ENCODE measurements at regions of chr11 and their contacts with region 1.

Region 1: DNA sequence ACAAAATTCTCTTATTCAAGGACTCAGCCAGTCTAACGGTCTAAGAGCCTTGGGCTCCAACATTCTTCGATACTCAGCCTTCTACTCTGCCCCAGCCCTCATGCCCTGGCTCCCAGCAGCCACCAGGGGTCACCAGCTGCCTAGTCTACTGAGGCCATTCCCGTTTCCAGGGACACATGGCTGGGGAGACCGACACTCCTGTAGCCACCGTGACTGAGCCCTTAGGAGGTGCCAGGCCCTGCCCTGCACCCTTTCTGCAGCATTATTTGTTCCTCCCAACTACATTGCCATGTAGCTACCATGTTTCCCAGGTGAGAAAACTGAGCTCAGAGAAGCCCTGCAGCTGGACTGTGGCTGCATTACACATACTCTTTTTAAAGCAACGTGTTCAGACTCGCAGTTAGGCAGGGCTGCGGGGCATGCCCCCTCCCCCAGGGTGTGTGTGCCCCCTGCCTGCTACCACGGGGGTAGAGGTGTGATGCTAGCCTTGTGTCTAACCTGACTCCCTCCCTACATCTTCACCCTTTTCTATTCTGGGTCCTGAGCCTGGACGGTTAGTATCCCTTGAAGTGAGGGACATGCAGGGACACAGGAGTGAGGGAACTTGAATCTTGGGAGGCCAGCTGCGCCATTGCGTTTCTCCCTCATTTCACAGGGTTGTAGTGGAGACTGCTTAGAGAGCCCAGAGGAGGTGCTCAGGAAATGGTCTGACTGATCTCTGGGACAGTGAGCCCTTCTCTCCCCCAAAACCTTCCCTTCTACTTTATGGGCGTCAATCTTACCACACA is 17.5 kb downstream of the ATG16L2 start:
- DNase-seq: peak; percentile 64 to 82
- ATAC-seq: peak; percentile 79 to 91
- H3K4me3 ChIP-seq: no peak overlapping the region
- H3K27ac ChIP-seq: peak overlapping the region; percentile 69 to 85 (median 80)
- H3K4me1 ChIP-seq: peaks cover 31 to 50% of the 10 kb centered on the region in 2 donors
- H3K27me3 ChIP-seq: no peaks in the 10 kb centered on the region
- CTCF ChIP-seq: peak; percentile 94 to 97 (median 96)
- POLR2A ChIP-seq: no peak

Region 2: GRCh38 chr11:72848846-72849466 is 17.2 kb after region 1 on chr11:
- in situ Hi-C with region 1: no loop called
- intact Hi-C with region 1: loop called (anchors 1 kb)
- DNase-seq: no peak
- ATAC-seq: no peak
- H3K4me3 ChIP-seq: no peak overlapping the region
- H3K27ac ChIP-seq: no peak overlapping the region
- H3K4me1 ChIP-seq: peaks cover 0 to 5% of the 10 kb centered on the region in 2 donors
- H3K27me3 ChIP-seq: no peaks in the 10 kb centered on the region
- CTCF ChIP-seq: peak; percentile 23 to 59 (median 46)
- POLR2A ChIP-seq: no peak

Region 3: GRCh38 chr11:73177778-73178577 is 346.3 kb after region 1 on chr11:
- in situ Hi-C with region 1: loop called (anchors 5 kb)
- intact Hi-C with region 1: loop called (anchors 1 kb)
- DNase-seq: peak; percentile 56 to 72
- ATAC-seq: peak; percentile 64 to 71
- H3K4me3 ChIP-seq: no peak overlapping the region
- H3K27ac ChIP-seq: peak overlapping the region; percentile 29 to 63 (median 46)
- H3K4me1 ChIP-seq: peaks cover 16 to 25% of the 10 kb centered on the region in 2 donors
- H3K27me3 ChIP-seq: no peaks in the 10 kb centered on the region
- CTCF ChIP-seq: peak; percentile 80 to 92 (median 89)
- POLR2A ChIP-seq: no peak

Region 4: GRCh38 chr11:73242251-73243079 is 410.8 kb after region 1 on chr11:
- in situ Hi-C with region 1: no loop called
- intact Hi-C with region 1: loop called (anchors 2 kb)
- DNase-seq: peak; percentile 45 to 75
- ATAC-seq: peak; percentile 8 to 25
- H3K4me3 ChIP-seq: peak overlapping the region in 1 of 4 donors; percentile 12
- H3K27ac ChIP-seq: peak overlapping the region; percentile 92 to 98 (median 96)
- H3K4me1 ChIP-seq: peaks cover 44 to 52% of the 10 kb centered on the region in 2 donors
- H3K27me3 ChIP-seq: no peaks in the 10 kb centered on the region
- CTCF ChIP-seq: peak; percentile 90 to 93 (median 91)
- POLR2A ChIP-seq: no peak

Region 5: DNA sequence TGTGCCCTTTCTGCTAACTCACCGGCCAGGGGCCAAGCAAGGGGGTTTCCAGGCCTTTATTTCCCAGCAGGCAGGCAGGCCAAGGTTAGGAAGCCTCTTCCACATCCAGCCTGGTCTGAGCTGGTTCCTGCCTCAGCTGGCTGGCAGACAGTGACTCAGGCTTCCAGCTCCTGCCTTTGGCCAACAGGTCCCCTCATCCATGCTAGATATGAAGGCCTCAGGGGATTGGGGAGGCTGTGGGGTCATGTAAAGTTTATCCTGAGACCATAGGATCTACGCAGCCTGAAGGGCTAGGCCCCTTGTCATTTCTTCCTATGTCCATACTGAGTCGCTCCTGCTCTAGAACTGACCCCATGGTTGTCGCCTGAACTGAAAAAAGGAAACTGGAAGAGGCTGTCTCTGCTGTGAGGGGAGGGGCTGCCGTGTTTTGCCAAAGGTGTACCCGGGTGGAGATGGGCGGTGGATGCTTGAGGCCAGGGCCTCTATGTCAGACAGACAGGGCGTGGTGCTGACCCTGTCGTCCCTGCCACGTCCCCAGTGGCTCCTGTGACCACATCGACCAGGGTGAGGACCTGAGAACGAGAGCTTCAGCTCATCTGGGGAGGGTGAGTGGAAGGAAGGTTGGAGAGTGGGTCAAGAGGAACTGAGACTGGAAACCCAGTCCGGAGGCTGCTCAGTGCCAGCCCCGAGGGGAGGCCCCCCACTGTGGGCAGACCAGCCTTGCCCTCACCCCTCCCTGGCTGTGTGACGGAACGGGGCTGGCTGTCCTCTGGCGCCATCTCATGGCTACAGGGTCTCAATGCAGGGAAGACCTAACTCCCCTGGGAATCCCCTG is 457.4 kb after region 1 on chr11:
- in situ Hi-C with region 1: loop called (anchors 25 kb)
- intact Hi-C with region 1: loop called (anchors 1 kb)
- DNase-seq: peak; percentile 48 to 64
- ATAC-seq: peak; percentile 78 to 80
- H3K4me3 ChIP-seq: peak overlapping the region; percentile 23 to 52 (median 28)
- H3K27ac ChIP-seq: peak overlapping the region in 3 of 4 donors; percentile 31 to 61 (median 50)
- H3K4me1 ChIP-seq: peaks cover 3 to 5% of the 10 kb centered on the region in 2 donors
- H3K27me3 ChIP-seq: no peaks in the 10 kb centered on the region
- CTCF ChIP-seq: peak; percentile 90 to 96 (median 94)
- POLR2A ChIP-seq: no peak

Region 6: DNA sequence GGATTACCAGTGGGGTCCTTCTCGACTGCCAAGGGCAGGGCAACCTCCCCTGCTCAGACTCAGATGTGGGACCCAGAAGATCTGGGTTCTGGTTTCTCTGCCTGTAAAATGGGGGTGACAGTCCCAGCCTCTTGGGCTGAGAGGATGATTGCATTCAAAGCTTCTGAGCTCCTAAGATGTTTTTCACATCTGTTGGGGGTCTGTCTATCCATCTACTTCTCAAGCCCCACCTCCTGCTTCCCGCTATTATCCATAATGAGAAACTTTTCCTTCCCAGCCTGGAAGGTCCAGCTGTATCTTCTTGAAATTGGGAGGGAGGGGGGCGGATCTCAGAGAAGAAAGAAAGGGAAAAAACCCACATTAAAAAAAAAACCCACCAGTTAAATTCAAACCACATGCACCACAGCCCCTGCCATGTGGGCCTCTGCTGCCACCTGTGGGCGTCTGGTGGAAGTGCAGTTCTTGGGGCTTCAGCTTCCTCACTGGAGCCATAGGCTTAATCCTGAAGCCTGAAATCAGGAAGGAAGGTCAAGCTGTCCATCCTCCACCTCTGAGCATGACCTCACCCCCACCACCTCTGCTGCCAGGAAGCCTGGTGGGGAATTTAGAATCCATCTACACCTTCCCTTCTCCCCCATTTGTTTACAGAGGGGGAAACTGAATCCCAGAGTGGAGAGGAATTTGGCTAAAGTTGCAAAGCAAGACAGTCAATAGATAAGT is 503.7 kb after region 1 on chr11:
- in situ Hi-C with region 1: no loop called
- intact Hi-C with region 1: loop called (anchors 10 kb)
- DNase-seq: peak; percentile 47 to 76
- ATAC-seq: peak; percentile 74 to 86
- H3K4me3 ChIP-seq: no peak overlapping the region
- H3K27ac ChIP-seq: peak overlapping the region; percentile 27 to 59 (median 45)
- H3K4me1 ChIP-seq: peaks cover 10 to 12% of the 10 kb centered on the region in 2 donors
- H3K27me3 ChIP-seq: no peaks in the 10 kb centered on the region
- CTCF ChIP-seq: peak; percentile 76 to 100 (median 88)
- POLR2A ChIP-seq: no peak